IMR-90 (cell line): ENCODE measurements at regions of chr4 and their contacts with region 1.

Region 1: GRCh38 chr4:73653695-73654106 is 33.5 kb upstream of the RASSF6 start:
- DNase-seq: peak; percentile 62
- ATAC-seq: peak; percentile 69
- H3K4me3 ChIP-seq: no peak overlapping the region
- H3K27ac ChIP-seq: no peak overlapping the region
- H3K4me1 ChIP-seq: no peaks in the 10 kb centered on the region
- H3K27me3 ChIP-seq: peaks cover 3% of the 10 kb centered on the region; the same call in 1 of the 2 replicates
- CTCF ChIP-seq: peak; percentile 76
- POLR2A ChIP-seq: no peak
- RAD21 ChIP-seq: peak; percentile 90

Region 2: GRCh38 chr4:73341454-73341853 is 312.2 kb before region 1 on chr4:
- CTCF ChIA-PET with region 1: no interaction called
- POLR2A ChIA-PET with region 1: no interaction called
- dilution Hi-C with region 1: no loop called
- in situ Hi-C with region 1: no loop called
- intact Hi-C with region 1: loop called (anchors 1 kb)
- DNase-seq: peak; percentile 53
- ATAC-seq: peak; percentile 89
- H3K4me3 ChIP-seq: no peak overlapping the region
- H3K27ac ChIP-seq: no peak overlapping the region
- H3K4me1 ChIP-seq: no peaks in the 10 kb centered on the region
- H3K27me3 ChIP-seq: no peaks in the 10 kb centered on the region; the same call in none of the 2 replicates
- CTCF ChIP-seq: peak; percentile 51
- POLR2A ChIP-seq: no peak
- RAD21 ChIP-seq: peak; percentile 70

Region 3: GRCh38 chr4:73446336-73446938 is 207.3 kb before region 1 on chr4:
- CTCF ChIA-PET with region 1: no interaction called
- POLR2A ChIA-PET with region 1: no interaction called
- dilution Hi-C with region 1: no loop called
- in situ Hi-C with region 1: no loop called
- intact Hi-C with region 1: loop called (anchors 10 kb)
- DNase-seq: peak; percentile 63
- ATAC-seq: peak; percentile 84
- H3K4me3 ChIP-seq: no peak overlapping the region
- H3K27ac ChIP-seq: no peak overlapping the region
- H3K4me1 ChIP-seq: peaks cover 3% of the 10 kb centered on the region
- H3K27me3 ChIP-seq: peaks cover 2% of the 10 kb centered on the region; the same call in 1 of the 2 replicates
- CTCF ChIP-seq: peak; percentile 92
- POLR2A ChIP-seq: no peak
- RAD21 ChIP-seq: peak; percentile 58

Region 4: GRCh38 chr4:73520821-73521220 is 132.9 kb before region 1 on chr4:
- CTCF ChIA-PET with region 1: no interaction called
- POLR2A ChIA-PET with region 1: no interaction called
- dilution Hi-C with region 1: no loop called
- in situ Hi-C with region 1: no loop called
- intact Hi-C with region 1: no loop called
- DNase-seq: peak; percentile 60
- ATAC-seq: peak; percentile 91
- H3K4me3 ChIP-seq: no peak overlapping the region
- H3K27ac ChIP-seq: no peak overlapping the region
- H3K4me1 ChIP-seq: no peaks in the 10 kb centered on the region
- H3K27me3 ChIP-seq: peaks cover 4% of the 10 kb centered on the region
- CTCF ChIP-seq: no peak
- POLR2A ChIP-seq: no peak
- RAD21 ChIP-seq: no peak

Region 5: DNA sequence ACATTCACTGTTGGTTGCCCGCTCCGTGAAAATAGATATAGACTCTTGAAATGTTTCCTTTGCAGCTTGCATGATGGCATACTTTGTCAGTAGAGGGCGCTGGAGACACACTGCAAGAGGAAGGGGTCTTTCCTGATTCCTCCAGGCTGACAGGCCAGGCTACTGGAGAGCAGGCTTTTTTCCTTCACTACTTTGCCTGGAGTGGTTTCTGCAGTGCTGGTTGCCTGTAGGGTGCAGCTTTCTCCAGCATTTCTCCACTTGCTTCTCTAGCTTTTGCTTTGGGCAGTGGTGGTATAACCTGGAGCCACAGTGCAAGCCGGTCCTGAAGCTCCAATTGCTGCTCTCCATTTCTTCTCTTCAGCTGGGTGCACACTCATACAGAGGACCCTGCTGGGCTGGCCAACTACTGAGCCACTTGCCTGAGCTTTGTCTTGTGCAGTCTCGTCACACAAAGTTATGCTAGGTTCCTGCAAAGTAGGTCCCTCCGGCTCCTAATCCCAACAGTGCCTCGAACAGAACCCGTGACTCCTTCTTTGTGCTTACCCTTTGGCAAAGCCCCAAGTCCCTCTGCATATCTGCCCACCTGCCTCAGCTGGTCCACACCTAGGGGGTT is 79.8 kb before region 1 on chr4:
- CTCF ChIA-PET with region 1: interaction called, 11 read pairs
- POLR2A ChIA-PET with region 1: no interaction called
- dilution Hi-C with region 1: no loop called
- in situ Hi-C with region 1: no loop called
- intact Hi-C with region 1: loop called (anchors 1 kb)
- DNase-seq: peak; percentile 82
- ATAC-seq: peak; percentile 98
- H3K4me3 ChIP-seq: no peak overlapping the region
- H3K27ac ChIP-seq: no peak overlapping the region
- H3K4me1 ChIP-seq: no peaks in the 10 kb centered on the region
- H3K27me3 ChIP-seq: peaks cover 2% of the 10 kb centered on the region; the same call in 1 of the 2 replicates
- CTCF ChIP-seq: peak; percentile 88
- POLR2A ChIP-seq: no peak
- RAD21 ChIP-seq: peak; percentile 80

Region 6: DNA sequence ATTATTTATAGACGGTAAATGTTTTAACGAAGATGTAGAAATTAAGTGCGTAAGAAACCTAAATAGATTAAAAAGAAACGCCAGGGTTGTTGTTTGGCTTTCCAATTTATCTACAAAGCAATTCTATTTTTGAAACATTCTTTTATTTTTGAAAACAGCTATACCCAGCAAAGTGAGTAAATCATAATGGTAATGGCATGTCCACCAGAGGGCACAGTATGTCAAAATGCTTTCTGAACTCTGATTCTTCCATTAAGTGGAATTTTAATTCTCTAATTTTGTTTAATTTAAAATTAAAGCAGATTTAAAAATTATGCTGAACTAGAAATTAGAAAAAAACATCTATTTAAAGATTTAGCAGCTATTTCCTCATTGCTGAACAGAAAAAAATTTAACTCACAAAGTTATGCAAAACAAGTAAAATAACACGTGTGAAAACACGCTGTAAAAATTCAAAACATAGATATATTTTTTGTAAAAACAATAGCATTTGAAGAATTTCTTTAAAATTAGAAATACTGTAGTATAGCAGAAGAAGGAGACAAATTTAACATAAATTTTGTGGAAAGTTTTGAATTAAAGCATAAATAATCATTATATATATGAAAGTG is 60.0 kb before region 1 on chr4:
- CTCF ChIA-PET with region 1: interaction called, 16 read pairs
- POLR2A ChIA-PET with region 1: no interaction called
- dilution Hi-C with region 1: no loop called
- in situ Hi-C with region 1: loop called (anchors 5 kb)
- intact Hi-C with region 1: loop called (anchors 1 kb)
- DNase-seq: peak; percentile 49
- ATAC-seq: 0 out of 2 replicates have a peak, but pooled peaks have one; percentile 43
- H3K4me3 ChIP-seq: no peak overlapping the region
- H3K27ac ChIP-seq: no peak overlapping the region
- H3K4me1 ChIP-seq: peaks cover 2% of the 10 kb centered on the region; the same call in 1 of the 2 replicates
- H3K27me3 ChIP-seq: no peaks in the 10 kb centered on the region
- CTCF ChIP-seq: peak; percentile 62
- POLR2A ChIP-seq: no peak
- RAD21 ChIP-seq: peak; percentile 53

Region 7: GRCh38 chr4:73816814-73817213 is 163.1 kb after region 1 on chr4:
- CTCF ChIA-PET with region 1: no interaction called
- POLR2A ChIA-PET with region 1: no interaction called
- dilution Hi-C with region 1: no loop called
- in situ Hi-C with region 1: no loop called
- intact Hi-C with region 1: no loop called
- DNase-seq: peak; percentile 89
- ATAC-seq: peak; percentile 97
- H3K4me3 ChIP-seq: no peak overlapping the region
- H3K27ac ChIP-seq: no peak overlapping the region
- H3K4me1 ChIP-seq: 0 out of 2 replicates have a peak, but pooled peaks cover 1% of the 10 kb centered on the region
- H3K27me3 ChIP-seq: peaks cover under 1% of the 10 kb centered on the region; the same call in 1 of the 2 replicates
- CTCF ChIP-seq: no peak
- POLR2A ChIP-seq: no peak
- RAD21 ChIP-seq: no peak

Region 8: GRCh38 chr4:74320559-74321118 is 666.9 kb after region 1 on chr4:
- CTCF ChIA-PET with region 1: no interaction called
- POLR2A ChIA-PET with region 1: no interaction called
- dilution Hi-C with region 1: no loop called
- in situ Hi-C with region 1: loop called (anchors 25 kb)
- intact Hi-C with region 1: no loop called
- DNase-seq: peak; percentile 55
- ATAC-seq: peak; percentile 83
- H3K4me3 ChIP-seq: no peak overlapping the region
- H3K27ac ChIP-seq: no peak overlapping the region
- H3K4me1 ChIP-seq: no peaks in the 10 kb centered on the region
- H3K27me3 ChIP-seq: peaks cover 4% of the 10 kb centered on the region
- CTCF ChIP-seq: peak; percentile 74
- POLR2A ChIP-seq: no peak
- RAD21 ChIP-seq: peak; percentile 82

Region 9: GRCh38 chr4:74874753-74875367 is 1221.2 kb after region 1 on chr4:
- CTCF ChIA-PET with region 1: no interaction called
- POLR2A ChIA-PET with region 1: no interaction called
- dilution Hi-C with region 1: no loop called
- in situ Hi-C with region 1: no loop called
- intact Hi-C with region 1: no loop called
- DNase-seq: peak; percentile 84
- ATAC-seq: peak; percentile 96
- H3K4me3 ChIP-seq: no peak overlapping the region
- H3K27ac ChIP-seq: no peak overlapping the region
- H3K4me1 ChIP-seq: no peaks in the 10 kb centered on the region
- H3K27me3 ChIP-seq: peaks cover 3% of the 10 kb centered on the region; the same call in 1 of the 2 replicates
- CTCF ChIP-seq: peak; percentile 86
- POLR2A ChIP-seq: no peak
- RAD21 ChIP-seq: peak; percentile 68